Right ventricle myocardium superior (tissue), 1 donor: ENCODE measurements at regions of chr3 and their contacts with region 1.

Region 1: GRCh38 chr3:141105828-141106628 is 54.9 kb downstream of the SPSB4 start:
- DNase-seq: no peak
- ATAC-seq: peak; percentile 46

Region 2: GRCh38 chr3:141011232-141011996 is 94.6 kb before region 1 on chr3:
- intact Hi-C with region 1: loop called (anchors 5 kb)
- DNase-seq: peak; percentile 88
- ATAC-seq: peak; percentile 87

Region 3: DNA sequence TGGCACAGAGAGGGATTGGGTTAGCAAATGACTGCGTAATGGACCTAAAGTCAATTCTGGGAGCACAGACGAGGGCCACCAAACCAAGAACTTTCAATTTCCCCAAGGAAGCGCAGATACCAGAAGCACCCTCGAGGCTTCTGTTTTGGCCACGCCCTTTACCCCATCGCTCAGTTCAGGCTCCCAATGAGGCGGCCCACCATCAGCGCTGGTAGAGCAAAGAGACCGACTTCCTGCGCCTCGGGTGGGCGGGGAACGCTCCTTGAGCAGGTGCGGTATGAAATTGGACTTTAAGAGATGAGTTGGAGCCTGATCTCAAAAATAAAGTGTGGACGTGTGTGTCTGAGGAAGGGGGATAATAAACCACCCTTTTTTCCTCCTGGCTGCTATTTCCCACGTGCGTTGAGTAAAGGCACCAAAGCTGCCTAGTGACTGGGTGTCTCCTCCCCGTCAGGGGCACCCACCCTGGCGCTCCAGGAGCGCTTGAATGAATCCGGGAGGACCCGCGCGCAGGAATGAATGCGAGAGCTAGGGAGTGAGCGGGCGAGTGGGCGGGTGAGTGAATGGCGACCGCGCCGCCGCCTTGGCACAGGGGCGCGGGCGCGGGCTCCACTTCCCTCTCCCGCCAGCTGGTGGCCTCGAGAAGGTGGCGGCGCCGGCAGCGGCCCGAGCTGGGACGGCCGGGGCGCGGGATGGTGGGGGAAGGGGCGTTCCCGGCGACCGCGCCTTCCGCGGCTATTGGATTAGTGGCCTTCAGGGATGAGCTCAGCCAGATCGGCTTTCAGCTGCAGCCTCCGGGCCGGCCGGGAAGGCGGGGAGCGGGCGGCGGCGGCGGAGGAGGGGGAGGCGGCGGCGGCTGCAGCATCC is 55.2 kb before region 1 on chr3 and contains the start of gene SPSB4:
- intact Hi-C with region 1: loop called (anchors 2 kb)
- DNase-seq: peak; percentile 86
- ATAC-seq: peak; percentile 92
- total RNA-seq, gene SPSB4: 7.3 TPM